Ascending aorta (tissue), 2 donors: ENCODE measurements at regions of chr11 and their contacts with region 1.

Region 1: GRCh38 chr11:130002846-130003716 is 446 bp upstream of the PRDM10 start:
- DNase-seq: peak; percentile 76 to 97
- H3K4me3 ChIP-seq: peak overlapping the region; percentile 96 to 99
- H3K27ac ChIP-seq: peak overlapping the region; percentile 97 to 100
- H3K4me1 ChIP-seq: peaks cover 3 to 19% of the 10 kb centered on the region in 2 donors
- H3K27me3 ChIP-seq: no peaks in the 10 kb centered on the region
- CTCF ChIP-seq: no peak

Region 2: DNA sequence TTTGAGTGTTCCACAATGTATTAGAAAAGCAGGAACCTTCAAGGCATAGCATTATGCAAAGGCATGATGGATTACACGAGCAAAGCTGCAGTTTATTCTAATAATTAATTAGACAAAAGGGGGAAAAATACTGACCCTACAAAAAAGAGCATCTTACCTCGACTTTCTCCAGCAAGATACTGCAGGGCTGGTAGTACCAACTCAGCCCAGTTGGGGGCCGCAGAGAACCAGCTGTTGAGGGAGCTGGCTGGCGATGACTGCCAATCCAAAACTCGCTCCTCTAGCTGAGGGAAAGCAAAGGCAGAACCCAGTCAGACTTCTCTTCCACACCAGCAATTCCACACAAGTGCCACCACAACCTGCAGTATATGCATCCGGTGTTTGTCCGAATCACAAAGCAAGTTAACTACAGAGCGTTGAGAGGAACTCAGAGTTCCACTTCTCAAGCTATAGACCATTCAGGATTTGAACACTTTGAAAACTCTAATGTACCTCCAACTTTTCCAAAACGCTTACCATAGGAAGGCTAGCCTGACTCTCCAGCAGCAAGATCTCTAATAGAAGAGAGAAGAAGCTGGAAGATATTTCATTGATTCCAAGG is 121.4 kb before region 1 on chr11:
- intact Hi-C with region 1: no loop called
- DNase-seq: no peak
- H3K4me3 ChIP-seq: no peak overlapping the region
- H3K27ac ChIP-seq: no peak overlapping the region
- H3K4me1 ChIP-seq: no peaks in the 10 kb centered on the region
- H3K27me3 ChIP-seq: no peaks in the 10 kb centered on the region
- CTCF ChIP-seq: peak in 2 of 3 experiments; percentile 10 to 13

Region 3: GRCh38 chr11:129895126-129896041 is 107.7 kb before region 1 on chr11 and contains the start of gene NFRKB:
- intact Hi-C with region 1: loop called (anchors 5 kb)
- DNase-seq: peak in 1 of 2 donors; percentile 93
- H3K4me3 ChIP-seq: peak within 1 kb of the TSS; percentile 94 to 96
- H3K27ac ChIP-seq: peak within 1 kb of the TSS; percentile 60 to 78
- H3K4me1 ChIP-seq: peaks cover 0 to 9% of the 10 kb centered on the region in 2 donors
- H3K27me3 ChIP-seq: no peaks in the 10 kb centered on the region
- CTCF ChIP-seq: no peak
- total RNA-seq, gene NFRKB: 6.9 TPM

Region 4: GRCh38 chr11:129960216-129961214 is 42.6 kb before region 1 on chr11:
- intact Hi-C with region 1: no loop called
- DNase-seq: no peak
- H3K4me3 ChIP-seq: no peak overlapping the region
- H3K27ac ChIP-seq: no peak overlapping the region
- H3K4me1 ChIP-seq: no peaks in the 10 kb centered on the region
- H3K27me3 ChIP-seq: no peaks in the 10 kb centered on the region
- CTCF ChIP-seq: no peak

Region 5: GRCh38 chr11:130124096-130124495 is 121.0 kb after region 1 on chr11:
- intact Hi-C with region 1: loop called (anchors 2 kb)
- DNase-seq: peak; percentile 67 to 89
- H3K4me3 ChIP-seq: no peak overlapping the region
- H3K27ac ChIP-seq: peak overlapping the region; percentile 60 to 74
- H3K4me1 ChIP-seq: peaks cover 0 to 21% of the 10 kb centered on the region in 2 donors
- H3K27me3 ChIP-seq: no peaks in the 10 kb centered on the region
- CTCF ChIP-seq: no peak

Region 6: GRCh38 chr11:130403271-130403804 is 400.3 kb after region 1 on chr11:
- intact Hi-C with region 1: loop called (anchors 5 kb)
- DNase-seq: peak; percentile 30 to 89
- H3K4me3 ChIP-seq: peak overlapping the region in 1 of 2 donors; percentile 12
- H3K27ac ChIP-seq: peak overlapping the region; percentile 87 to 92
- H3K4me1 ChIP-seq: peaks cover 12 to 36% of the 10 kb centered on the region in 2 donors
- H3K27me3 ChIP-seq: no peaks in the 10 kb centered on the region
- CTCF ChIP-seq: no peak

Region 7: DNA sequence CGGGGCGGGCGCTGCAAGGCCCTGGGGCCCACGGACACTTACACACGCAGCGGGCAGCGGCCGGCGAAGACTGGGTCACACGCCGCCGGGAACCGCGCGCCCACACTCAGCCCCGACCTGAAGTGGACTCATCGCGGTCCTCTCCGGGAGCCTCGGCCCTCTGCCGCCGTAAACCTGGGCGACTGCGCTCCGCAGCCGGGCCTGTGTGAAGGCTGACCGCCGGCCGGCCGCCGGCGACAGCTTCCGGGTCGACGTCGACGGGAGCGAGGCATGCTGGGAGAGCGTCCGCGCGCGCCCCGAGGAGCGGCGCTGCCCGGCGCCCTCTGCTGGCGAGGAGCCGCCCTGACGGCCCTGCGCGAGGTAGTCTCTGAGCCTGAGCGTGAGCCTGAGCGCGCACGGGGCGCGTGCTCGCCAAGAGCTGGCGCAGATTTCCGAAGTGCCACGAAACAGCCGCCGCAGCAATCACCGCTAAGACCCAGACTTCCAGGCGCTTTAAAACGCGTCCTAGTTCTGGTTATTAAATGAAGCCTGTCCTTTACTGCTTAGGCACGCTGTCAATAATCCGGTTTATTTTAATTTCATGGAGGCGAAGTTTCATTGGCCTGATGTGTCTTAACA is 913.3 kb after region 1 on chr11 and contains the start of gene SNX19:
- intact Hi-C with region 1: loop called (anchors 2 kb)
- DNase-seq: peak; percentile 52 to 94
- H3K4me3 ChIP-seq: peak within 1 kb of the TSS; percentile 72 to 99
- H3K27ac ChIP-seq: peak within 1 kb of the TSS; percentile 86 to 97
- H3K4me1 ChIP-seq: peaks cover 6 to 11% of the 10 kb centered on the region in 2 donors
- H3K27me3 ChIP-seq: no peaks in the 10 kb centered on the region
- CTCF ChIP-seq: peak; percentile 88 to 96 (median 93)
- total RNA-seq, gene SNX19: 137 TPM